ENCODE measurements at regions of chr14 and their contacts with region 1.

Region 1: DNA sequence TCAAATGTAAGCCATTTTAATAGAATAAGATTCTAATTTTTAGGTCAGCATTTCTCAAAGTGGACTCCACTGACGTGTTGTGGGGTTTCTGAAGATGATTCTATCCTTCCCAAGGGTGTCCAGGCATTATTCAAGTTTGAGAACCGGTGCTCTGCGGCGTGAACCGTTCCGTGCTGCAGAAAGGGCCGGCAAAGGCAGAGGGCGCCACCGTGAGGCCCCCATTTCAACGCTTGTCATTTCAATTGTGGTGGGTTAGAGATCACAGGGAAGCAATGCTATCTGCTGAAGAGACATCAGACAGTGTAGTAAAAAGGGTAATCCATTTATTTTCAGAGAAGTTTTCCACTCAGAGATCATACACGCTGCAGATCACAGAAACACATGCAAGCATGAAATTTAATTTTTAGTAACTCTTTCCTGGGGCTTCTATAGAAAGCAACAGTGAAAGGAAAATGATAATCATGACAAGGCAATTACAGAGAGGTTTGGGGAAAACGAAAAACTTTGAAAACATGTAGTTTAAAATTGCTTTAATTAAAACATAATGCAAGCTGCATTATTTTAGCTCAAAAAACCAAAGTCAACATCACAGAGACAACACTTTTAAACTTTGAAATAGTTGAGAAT is 201.7 kb downstream of the EXOC5 start:
- DNase-seq: peak; percentile 17 to 67 (median 28)
- ATAC-seq: peak; percentile 95
- H3K4me3 ChIP-seq: no peak overlapping the region
- H3K27ac ChIP-seq: no peak overlapping the region
- H3K4me1 ChIP-seq: no peaks in the 10 kb centered on the region
- H3K27me3 ChIP-seq: 0 out of 5 replicates have a peak, but pooled peaks cover 0 to 2% of the 10 kb centered on the region in 2 experiments
- CTCF ChIP-seq: peak; percentile 71 to 82 (median 79)
- EP300 ChIP-seq: no peak
- POLR2A ChIP-seq: no peak
- RAD21 ChIP-seq: peak; percentile 78 to 87

Region 2: GRCh38 chr14:56491299-56492285 is 575.4 kb before region 1 on chr14:
- CTCF ChIA-PET with region 1: no interaction called
- POLR2A ChIA-PET with region 1: no interaction called
- in situ Hi-C with region 1: no loop called
- intact Hi-C with region 1: loop called (anchors 5 kb)
- DNase-seq: peak; percentile 12 to 41 (median 27)
- ATAC-seq: peak; percentile 73
- H3K4me3 ChIP-seq: no peak overlapping the region
- H3K27ac ChIP-seq: no peak overlapping the region
- H3K4me1 ChIP-seq: no peaks in the 10 kb centered on the region
- H3K27me3 ChIP-seq: no peaks in the 10 kb centered on the region; a peak in 1 of 5 replicates
- CTCF ChIP-seq: peak; percentile 47 to 60 (median 59); a peak in 5 of 6 replicates
- EP300 ChIP-seq: no peak
- POLR2A ChIP-seq: no peak
- RAD21 ChIP-seq: peak; percentile 37 to 63

Region 3: GRCh38 chr14:56659964-56660551 is 406.9 kb before region 1 on chr14:
- CTCF ChIA-PET with region 1: interaction called, 3 read pairs
- POLR2A ChIA-PET with region 1: no interaction called
- in situ Hi-C with region 1: no loop called
- intact Hi-C with region 1: loop called (anchors 2 kb)
- DNase-seq: peak; percentile 32 to 44 (median 36)
- ATAC-seq: peak; percentile 80
- H3K4me3 ChIP-seq: no peak overlapping the region
- H3K27ac ChIP-seq: no peak overlapping the region
- H3K4me1 ChIP-seq: no peaks in the 10 kb centered on the region
- H3K27me3 ChIP-seq: peaks cover 5 to 7% of the 10 kb centered on the region in 2 experiments; a peak in 4 of 5 replicates
- CTCF ChIP-seq: peak; percentile 60 to 74 (median 61)
- EP300 ChIP-seq: no peak
- POLR2A ChIP-seq: no peak
- RAD21 ChIP-seq: peak; percentile 69 to 87

Region 4: DNA sequence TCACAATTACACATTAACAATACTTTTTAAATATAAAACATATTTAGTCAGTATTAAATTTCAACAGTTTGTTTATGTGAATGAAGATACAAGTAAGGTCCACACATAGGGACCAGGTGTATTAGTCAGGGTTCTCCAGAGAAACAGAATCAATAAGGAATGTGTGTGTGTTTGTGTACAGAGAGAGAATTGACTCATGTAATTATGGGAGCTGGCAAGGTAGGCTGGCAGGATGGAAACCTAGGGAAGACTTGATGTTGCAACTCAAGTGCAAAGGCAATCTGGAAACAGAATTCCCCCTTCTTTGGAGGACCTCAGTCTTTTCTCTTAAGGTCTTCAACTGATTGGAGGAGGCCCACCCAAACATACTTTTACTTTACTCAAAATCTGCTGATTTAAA is 133.5 kb before region 1 on chr14:
- CTCF ChIA-PET with region 1: no interaction called
- POLR2A ChIA-PET with region 1: no interaction called
- in situ Hi-C with region 1: no loop called
- intact Hi-C with region 1: loop called (anchors 10 kb)
- DNase-seq: no peak
- ATAC-seq: no peak
- H3K4me3 ChIP-seq: no peak overlapping the region
- H3K27ac ChIP-seq: no peak overlapping the region
- H3K4me1 ChIP-seq: no peaks in the 10 kb centered on the region
- H3K27me3 ChIP-seq: no peaks in the 10 kb centered on the region
- CTCF ChIP-seq: no peak
- EP300 ChIP-seq: no peak
- POLR2A ChIP-seq: no peak
- RAD21 ChIP-seq: no peak

Region 5: GRCh38 chr14:57051633-57052032 is 15.4 kb before region 1 on chr14:
- CTCF ChIA-PET with region 1: no interaction called
- POLR2A ChIA-PET with region 1: no interaction called
- in situ Hi-C with region 1: no loop called
- intact Hi-C with region 1: no loop called
- DNase-seq: no peak
- ATAC-seq: no peak
- H3K4me3 ChIP-seq: no peak overlapping the region
- H3K27ac ChIP-seq: no peak overlapping the region
- H3K4me1 ChIP-seq: no peaks in the 10 kb centered on the region
- H3K27me3 ChIP-seq: no peaks in the 10 kb centered on the region
- CTCF ChIP-seq: no peak
- EP300 ChIP-seq: no peak
- POLR2A ChIP-seq: no peak
- RAD21 ChIP-seq: no peak

Region 6: DNA sequence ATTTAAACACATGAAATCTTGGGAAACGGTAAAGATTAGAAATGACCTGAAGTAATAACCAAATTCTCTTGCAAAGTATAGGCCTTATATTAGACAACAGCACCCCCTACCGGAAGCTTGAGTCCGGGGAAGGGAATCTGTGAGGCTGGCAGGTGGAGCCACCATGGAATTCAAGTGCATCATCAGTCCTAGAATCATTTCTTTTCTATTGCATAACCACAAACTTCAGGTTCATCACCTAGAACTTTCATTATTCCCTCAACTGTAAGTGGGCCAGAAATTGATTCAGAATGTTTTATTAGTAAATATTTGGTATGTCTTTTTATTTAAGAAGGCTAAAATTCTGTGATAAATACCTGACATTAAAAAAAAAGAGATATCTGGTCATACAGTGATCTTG is 250.3 kb after region 1 on chr14:
- CTCF ChIA-PET with region 1: interaction called, 3 read pairs
- POLR2A ChIA-PET with region 1: no interaction called
- in situ Hi-C with region 1: loop called (anchors 25 kb)
- intact Hi-C with region 1: loop called (anchors 2 kb)
- DNase-seq: peak; percentile 54 to 80 (median 55)
- ATAC-seq: peak; percentile 78
- H3K4me3 ChIP-seq: no peak overlapping the region
- H3K27ac ChIP-seq: no peak overlapping the region
- H3K4me1 ChIP-seq: no peaks in the 10 kb centered on the region
- H3K27me3 ChIP-seq: no peaks in the 10 kb centered on the region; a peak in 1 of 5 replicates
- CTCF ChIP-seq: peak; percentile 67 to 79 (median 69)
- EP300 ChIP-seq: no peak
- POLR2A ChIP-seq: no peak
- RAD21 ChIP-seq: peak; percentile 60 to 77

Measured in K562 (cell line).